Caco-2 (cell line): ENCODE measurements at regions of chr4 and their contacts with region 1.

Region 1: GRCh38 chr4:10028910-10029309 is 7.6 kb upstream of the SLC2A9 start:
- DNase-seq: peak; percentile 41 to 57
- H3K4me3 ChIP-seq: no peak overlapping the region
- H3K4me3 Mint-ChIP-seq: no peak overlapping the region
- H3K27ac Mint-ChIP-seq: peak overlapping the region; percentile 30
- H3K4me1 ChIP-seq: peaks cover 47% of the 10 kb centered on the region
- H3K4me1 Mint-ChIP-seq: peaks cover 41% of the 10 kb centered on the region
- H3K27me3 ChIP-seq: no peaks in the 10 kb centered on the region
- H3K27me3 Mint-ChIP-seq: no peaks in the 10 kb centered on the region
- CTCF ChIP-seq: no peak

Region 2: GRCh38 chr4:9735515-9735914 is 293.4 kb before region 1 on chr4:
- CTCF ChIA-PET with region 1: no interaction called
- POLR2A ChIA-PET with region 1: no interaction called
- intact Hi-C with region 1: no loop called
- DNase-seq: no peak
- H3K4me3 ChIP-seq: no peak overlapping the region
- H3K4me3 Mint-ChIP-seq: no peak overlapping the region
- H3K27ac Mint-ChIP-seq: no peak overlapping the region
- H3K4me1 ChIP-seq: peaks cover 4% of the 10 kb centered on the region; the same call in 1 of the 2 replicates
- H3K4me1 Mint-ChIP-seq: peaks cover 7% of the 10 kb centered on the region
- H3K27me3 ChIP-seq: no peaks in the 10 kb centered on the region
- H3K27me3 Mint-ChIP-seq: no peaks in the 10 kb centered on the region
- CTCF ChIP-seq: no peak

Region 3: GRCh38 chr4:10006231-10006600 is 22.7 kb before region 1 on chr4:
- CTCF ChIA-PET with region 1: no interaction called
- POLR2A ChIA-PET with region 1: no interaction called
- intact Hi-C with region 1: no loop called
- DNase-seq: no peak
- H3K4me3 ChIP-seq: no peak overlapping the region
- H3K4me3 Mint-ChIP-seq: no peak overlapping the region
- H3K27ac Mint-ChIP-seq: no peak overlapping the region
- H3K4me1 ChIP-seq: peaks cover 7% of the 10 kb centered on the region
- H3K4me1 Mint-ChIP-seq: no peaks in the 10 kb centered on the region
- H3K27me3 ChIP-seq: no peaks in the 10 kb centered on the region
- H3K27me3 Mint-ChIP-seq: no peaks in the 10 kb centered on the region
- CTCF ChIP-seq: no peak

Region 4: GRCh38 chr4:10045481-10045880 is 16.6 kb after region 1 on chr4:
- CTCF ChIA-PET with region 1: no interaction called
- POLR2A ChIA-PET with region 1: no interaction called
- intact Hi-C with region 1: loop called (anchors 2 kb)
- DNase-seq: peak in 1 of 2 experiments; percentile 64
- H3K4me3 ChIP-seq: no peak overlapping the region
- H3K4me3 Mint-ChIP-seq: no peak overlapping the region
- H3K27ac Mint-ChIP-seq: peak overlapping the region; percentile 71
- H3K4me1 ChIP-seq: peaks cover 51% of the 10 kb centered on the region
- H3K4me1 Mint-ChIP-seq: peaks cover 34% of the 10 kb centered on the region
- H3K27me3 ChIP-seq: no peaks in the 10 kb centered on the region
- H3K27me3 Mint-ChIP-seq: no peaks in the 10 kb centered on the region
- CTCF ChIP-seq: no peak

Region 5: DNA sequence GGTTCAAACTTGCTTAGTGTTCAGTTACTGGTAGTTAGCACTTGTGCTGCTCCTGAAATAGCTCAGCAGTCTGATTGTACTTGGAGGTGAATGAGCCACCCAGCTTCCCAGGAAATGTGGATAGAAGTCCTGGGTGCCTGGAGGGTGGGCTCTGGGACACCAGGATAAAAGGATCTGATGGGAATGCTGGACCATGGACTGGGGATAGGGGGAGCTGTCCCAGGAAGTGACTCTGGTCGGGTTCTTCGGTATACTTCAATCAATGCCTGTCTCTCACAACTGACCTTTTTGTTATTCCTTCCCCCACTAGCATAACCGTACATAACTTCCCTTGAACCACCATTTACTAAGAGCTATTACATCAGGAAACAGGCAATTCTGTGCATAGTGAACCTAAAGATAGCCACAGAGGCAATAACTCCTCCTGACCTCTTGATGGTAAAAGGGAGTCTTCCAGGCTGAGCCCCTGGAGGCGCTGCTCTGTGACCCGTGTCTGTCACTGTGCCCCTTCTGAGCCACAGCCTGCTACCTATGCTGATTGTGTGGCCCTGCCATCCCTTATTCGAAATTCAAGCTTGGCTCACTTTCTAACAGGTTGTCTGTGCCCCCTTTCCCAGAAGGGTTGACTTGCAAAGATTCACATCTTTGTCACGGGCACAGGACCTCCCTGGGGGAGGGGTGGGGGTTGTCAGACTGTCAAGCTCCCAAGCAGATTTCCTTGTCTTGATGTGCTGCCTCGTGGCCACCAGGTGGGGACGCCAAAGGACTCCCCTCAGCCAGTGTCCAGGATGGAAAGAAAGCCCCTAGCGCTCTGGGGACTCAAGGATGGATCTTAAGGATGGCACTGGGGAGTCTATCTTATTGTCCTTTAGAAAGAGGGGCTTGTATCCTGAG is 112.2 kb after region 1 on chr4:
- CTCF ChIA-PET with region 1: no interaction called
- POLR2A ChIA-PET with region 1: no interaction called
- intact Hi-C with region 1: no loop called
- DNase-seq: no peak
- H3K4me3 ChIP-seq: no peak overlapping the region
- H3K4me3 Mint-ChIP-seq: no peak overlapping the region
- H3K27ac Mint-ChIP-seq: no peak overlapping the region
- H3K4me1 ChIP-seq: no peaks in the 10 kb centered on the region
- H3K4me1 Mint-ChIP-seq: no peaks in the 10 kb centered on the region
- H3K27me3 ChIP-seq: no peaks in the 10 kb centered on the region
- H3K27me3 Mint-ChIP-seq: peaks cover 10% of the 10 kb centered on the region
- CTCF ChIP-seq: no peak